ENCODE measurements at regions of chr3 and their contacts with region 1.

Region 1: DNA sequence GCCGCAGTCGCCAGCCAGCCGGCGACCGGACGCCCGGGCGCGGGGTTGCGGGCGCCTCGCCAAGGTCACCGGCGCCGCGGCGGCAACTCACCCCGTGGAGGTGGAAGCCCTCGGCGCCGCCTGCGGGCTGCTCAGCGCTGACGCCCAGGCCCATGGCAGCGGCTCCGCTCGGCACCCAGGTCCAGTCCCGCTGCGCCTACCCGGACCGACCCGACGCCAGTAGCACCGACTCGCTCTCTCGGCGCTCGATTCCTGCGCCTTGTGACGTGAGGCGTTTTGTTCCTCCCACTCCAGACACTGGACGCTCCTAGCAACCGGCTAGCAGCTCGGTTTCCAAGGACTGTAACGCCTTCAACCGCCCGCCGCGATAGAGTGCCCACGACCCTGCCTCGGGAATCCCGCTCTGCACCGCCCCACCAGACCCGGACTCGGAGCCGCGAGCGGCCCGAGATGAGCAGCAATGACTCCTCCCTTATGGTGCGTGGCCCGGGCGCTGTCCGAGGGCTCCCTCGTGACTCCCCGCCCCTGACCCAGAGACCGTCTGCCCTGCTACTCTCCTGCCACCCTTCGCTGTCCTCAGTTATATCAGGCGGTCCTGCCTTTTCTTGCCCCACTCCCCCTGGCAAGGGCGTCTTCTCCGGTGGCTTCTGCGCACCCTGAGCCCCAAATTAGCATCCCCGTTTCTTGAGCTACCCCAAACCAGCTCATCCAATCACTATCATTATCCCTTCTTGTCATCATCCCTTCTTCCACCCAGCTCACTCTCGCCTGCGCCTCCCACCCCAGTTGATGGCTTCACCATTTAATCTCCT is at the starts of genes GORASP1 and TTC21A:
- DNase-seq: peak; percentile 55
- H3K4me3 Mint-ChIP-seq: peak within 1 kb of the TSS; percentile 93
- H3K27ac Mint-ChIP-seq: peak within 1 kb of the TSS; percentile 54
- H3K4me1 Mint-ChIP-seq: peaks cover 29% of the 10 kb centered on the region
- H3K27me3 Mint-ChIP-seq: peaks cover 3% of the 10 kb centered on the region
- total RNA-seq, gene GORASP1: 31.8 and 32.6 TPM in 2 replicates
- total RNA-seq, gene TTC21A: 0.55 TPM in 2 replicates

Region 2: GRCh38 chr3:39150799-39151631 is 43.4 kb after region 1 on chr3:
- intact Hi-C with region 1: loop called (anchors 1 kb)
- DNase-seq: no peak
- H3K4me3 Mint-ChIP-seq: peak overlapping the region; percentile 89
- H3K27ac Mint-ChIP-seq: peak overlapping the region; percentile 94
- H3K4me1 Mint-ChIP-seq: peaks cover 69% of the 10 kb centered on the region
- H3K27me3 Mint-ChIP-seq: no peaks in the 10 kb centered on the region

Region 3: GRCh38 chr3:39180546-39181346 is 73.2 kb after region 1 on chr3:
- intact Hi-C with region 1: loop called (anchors 1 kb)
- DNase-seq: peak; percentile 87
- H3K4me3 Mint-ChIP-seq: peak overlapping the region; percentile 74
- H3K27ac Mint-ChIP-seq: peak overlapping the region; percentile 59
- H3K4me1 Mint-ChIP-seq: peaks cover 45% of the 10 kb centered on the region
- H3K27me3 Mint-ChIP-seq: no peaks in the 10 kb centered on the region